ENCODE measurements at regions of chr11 and their contacts with region 1.

Region 1: DNA sequence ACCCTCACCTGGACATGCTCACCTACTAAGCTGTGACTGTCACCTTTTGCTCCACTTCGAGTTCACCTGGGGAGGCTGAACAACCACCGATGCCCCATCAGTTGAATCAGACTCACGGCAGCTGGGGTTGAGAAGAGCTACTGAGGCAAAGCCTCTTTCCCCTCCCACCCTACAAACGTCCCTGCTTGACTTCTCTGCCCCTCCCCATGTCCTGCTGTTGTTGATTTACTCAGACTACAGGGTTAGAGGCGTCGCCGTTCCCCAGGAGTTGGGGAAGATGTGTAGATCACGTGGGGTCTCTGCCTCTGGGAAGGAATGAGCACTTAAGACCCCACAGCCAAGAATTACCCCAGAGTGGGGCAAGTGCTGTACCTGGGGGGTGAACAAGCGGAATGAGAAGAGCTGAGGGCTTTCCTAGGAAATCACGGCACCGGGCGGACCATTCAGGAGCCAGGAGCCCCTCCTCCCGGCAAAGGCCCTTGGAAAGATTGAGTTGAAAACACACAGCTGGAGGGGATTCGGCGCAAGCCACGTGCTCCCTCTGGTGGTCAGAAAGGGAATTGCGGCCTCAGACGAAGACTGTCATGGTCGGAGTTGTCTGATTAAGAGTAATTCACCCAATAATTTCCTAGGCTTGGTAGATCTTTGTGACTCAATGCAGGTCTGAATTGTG is 7.0 kb downstream of the FXYD2 start:
- DNase-seq: peak; percentile 57
- H3K4me3 ChIP-seq: no peak overlapping the region
- H3K27ac ChIP-seq: peak overlapping the region in 1 of 2 donors; percentile 13
- H3K4me1 ChIP-seq: peaks cover 5% of the 10 kb centered on the region
- H3K27me3 ChIP-seq: no peaks in the 10 kb centered on the region
- CTCF ChIP-seq: peak; percentile 97 to 99 (median 98)
- POLR2A ChIP-seq: no peak

Region 2: GRCh38 chr11:117295438-117296137 is 521.9 kb before region 1 on chr11:
- intact Hi-C with region 1: no loop called
- DNase-seq: no peak
- H3K4me3 ChIP-seq: no peak overlapping the region
- H3K27ac ChIP-seq: no peak overlapping the region
- H3K4me1 ChIP-seq: no peaks in the 10 kb centered on the region
- H3K27me3 ChIP-seq: no peaks in the 10 kb centered on the region
- CTCF ChIP-seq: no peak
- POLR2A ChIP-seq: no peak

Region 3: DNA sequence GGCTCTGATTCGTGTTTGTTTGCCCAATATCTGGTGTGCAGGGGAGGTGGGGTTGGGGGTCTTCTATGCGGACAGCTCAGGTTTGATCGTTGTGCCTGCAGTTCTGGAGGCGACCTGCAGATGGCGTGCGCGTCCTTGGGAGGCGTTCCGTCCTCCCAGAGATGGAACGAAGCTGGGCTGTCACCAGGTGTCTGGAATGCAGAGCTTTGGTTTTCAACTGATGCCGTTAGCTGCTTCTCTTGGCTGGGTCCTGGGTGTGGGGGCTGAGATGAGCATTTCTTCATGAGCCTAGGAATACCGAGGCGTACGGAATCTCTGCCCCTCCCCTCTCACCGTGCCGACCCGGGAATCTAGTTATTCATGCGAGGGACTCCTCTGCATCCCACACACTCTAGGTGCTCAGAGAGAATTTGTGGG is 391.2 kb before region 1 on chr11:
- intact Hi-C with region 1: loop called (anchors 2 kb)
- DNase-seq: peak; percentile 35
- H3K4me3 ChIP-seq: no peak overlapping the region
- H3K27ac ChIP-seq: no peak overlapping the region
- H3K4me1 ChIP-seq: no peaks in the 10 kb centered on the region
- H3K27me3 ChIP-seq: no peaks in the 10 kb centered on the region
- CTCF ChIP-seq: peak; percentile 75 to 93 (median 88)
- POLR2A ChIP-seq: no peak

Region 4: DNA sequence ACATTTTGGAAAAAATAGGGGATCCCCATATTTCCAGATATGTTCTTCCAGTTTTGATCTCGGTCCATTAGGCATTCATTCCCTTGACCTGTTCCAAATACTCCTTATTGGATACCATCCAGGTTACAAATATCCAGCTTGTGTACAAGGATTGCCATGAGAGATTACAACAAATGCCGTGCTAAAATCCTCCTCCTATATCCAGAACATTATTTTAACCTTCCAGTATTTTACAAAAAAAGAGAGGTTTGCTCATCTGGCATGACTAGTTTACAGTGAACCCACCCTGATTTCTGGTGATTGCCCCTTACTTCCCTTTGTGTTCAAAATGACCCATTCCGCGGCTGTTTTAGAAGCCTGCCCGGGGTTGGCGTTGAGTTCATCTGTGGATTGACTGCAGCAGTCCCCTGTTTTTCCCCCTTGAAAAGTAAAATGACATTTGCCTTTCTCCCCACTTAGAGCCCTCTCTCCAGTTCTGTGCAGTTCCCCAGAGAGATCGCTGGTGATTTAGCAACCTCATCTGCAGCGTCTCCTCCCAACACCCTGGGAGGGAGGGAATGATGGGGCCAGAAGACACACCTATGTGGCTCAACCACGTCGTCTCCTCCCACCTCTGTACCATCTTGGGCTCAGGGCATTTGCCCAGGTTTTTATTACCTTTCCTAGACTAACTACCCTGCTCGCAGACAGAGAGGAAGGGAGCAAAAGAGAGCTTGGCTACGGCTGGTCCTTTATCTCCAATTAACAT is 94.1 kb before region 1 on chr11:
- intact Hi-C with region 1: no loop called
- DNase-seq: no peak
- H3K4me3 ChIP-seq: no peak overlapping the region
- H3K27ac ChIP-seq: no peak overlapping the region
- H3K4me1 ChIP-seq: no peaks in the 10 kb centered on the region
- H3K27me3 ChIP-seq: no peaks in the 10 kb centered on the region
- CTCF ChIP-seq: no peak
- POLR2A ChIP-seq: no peak

Region 5: GRCh38 chr11:117781627-117782026 is 35.9 kb before region 1 on chr11:
- intact Hi-C with region 1: no loop called
- DNase-seq: no peak
- H3K4me3 ChIP-seq: no peak overlapping the region
- H3K27ac ChIP-seq: no peak overlapping the region
- H3K4me1 ChIP-seq: no peaks in the 10 kb centered on the region
- H3K27me3 ChIP-seq: peaks cover 5% of the 10 kb centered on the region
- CTCF ChIP-seq: no peak
- POLR2A ChIP-seq: no peak

Region 6: GRCh38 chr11:118051611-118052461 is 234.3 kb after region 1 on chr11:
- intact Hi-C with region 1: loop called (anchors 5 kb)
- DNase-seq: no peak
- H3K4me3 ChIP-seq: no peak overlapping the region
- H3K27ac ChIP-seq: no peak overlapping the region
- H3K4me1 ChIP-seq: no peaks in the 10 kb centered on the region
- H3K27me3 ChIP-seq: no peaks in the 10 kb centered on the region
- CTCF ChIP-seq: no peak
- POLR2A ChIP-seq: no peak

Measured in prostate gland (tissue), 2 donors.